ENCODE measurements at regions of chr17 and their contacts with region 1.

Region 1: DNA sequence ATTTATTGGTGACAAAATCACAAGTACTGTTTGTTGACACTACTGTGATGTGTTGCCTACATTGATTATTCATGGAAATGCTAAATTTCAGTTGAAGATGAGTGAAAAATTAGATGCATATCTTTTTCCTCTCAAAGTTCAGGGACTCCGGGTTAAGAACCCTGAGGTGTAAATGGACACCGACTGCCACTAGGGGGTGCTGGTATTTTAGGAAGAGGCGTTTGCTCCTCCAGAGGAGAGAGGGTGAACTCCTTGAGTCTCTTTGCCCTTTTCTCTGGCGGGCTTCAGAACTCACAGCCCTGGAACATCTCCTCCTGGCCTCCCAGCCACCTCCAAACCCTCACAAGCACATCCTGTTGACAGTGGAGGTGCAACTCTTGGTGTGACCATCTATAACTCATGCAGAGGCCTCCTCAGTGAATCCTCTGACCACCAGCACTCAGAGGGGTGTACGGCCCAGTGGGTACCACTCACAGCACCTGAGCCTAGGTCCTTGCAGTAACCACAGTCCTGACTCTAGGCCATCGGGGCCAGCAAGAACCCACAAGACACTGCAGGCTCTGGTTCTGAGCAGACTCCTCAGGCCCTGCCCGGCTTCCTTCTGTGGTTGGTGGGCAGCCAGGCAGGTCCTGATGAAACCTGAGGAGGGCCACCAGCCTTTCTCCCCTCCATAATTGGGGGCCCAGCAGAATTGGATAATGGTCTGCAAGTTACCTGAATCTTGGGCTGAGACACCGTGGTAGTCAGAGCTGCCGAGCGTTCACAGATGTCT is 26.2 kb upstream of the PIK3R5 start:
- DNase-seq: peak; percentile 58 to 71 (median 66)
- H3K4me3 ChIP-seq: no peak overlapping the region
- H3K4me3 Mint-ChIP-seq: no peak overlapping the region
- H3K27ac ChIP-seq: no peak overlapping the region
- H3K27ac Mint-ChIP-seq: peak overlapping the region in 3 of 7 donors; percentile 8 to 21 (median 12)
- H3K4me1 ChIP-seq: peaks cover 0 to 10% of the 10 kb centered on the region in 2 donors
- H3K4me1 Mint-ChIP-seq: peaks cover 9% of the 10 kb centered on the region
- H3K27me3 ChIP-seq: no peaks in the 10 kb centered on the region
- H3K27me3 Mint-ChIP-seq: peaks cover 4 to 9% (median 5%) of the 10 kb centered on the region in 3 donors
- CTCF ChIP-seq: peak; percentile 96

Region 2: DNA sequence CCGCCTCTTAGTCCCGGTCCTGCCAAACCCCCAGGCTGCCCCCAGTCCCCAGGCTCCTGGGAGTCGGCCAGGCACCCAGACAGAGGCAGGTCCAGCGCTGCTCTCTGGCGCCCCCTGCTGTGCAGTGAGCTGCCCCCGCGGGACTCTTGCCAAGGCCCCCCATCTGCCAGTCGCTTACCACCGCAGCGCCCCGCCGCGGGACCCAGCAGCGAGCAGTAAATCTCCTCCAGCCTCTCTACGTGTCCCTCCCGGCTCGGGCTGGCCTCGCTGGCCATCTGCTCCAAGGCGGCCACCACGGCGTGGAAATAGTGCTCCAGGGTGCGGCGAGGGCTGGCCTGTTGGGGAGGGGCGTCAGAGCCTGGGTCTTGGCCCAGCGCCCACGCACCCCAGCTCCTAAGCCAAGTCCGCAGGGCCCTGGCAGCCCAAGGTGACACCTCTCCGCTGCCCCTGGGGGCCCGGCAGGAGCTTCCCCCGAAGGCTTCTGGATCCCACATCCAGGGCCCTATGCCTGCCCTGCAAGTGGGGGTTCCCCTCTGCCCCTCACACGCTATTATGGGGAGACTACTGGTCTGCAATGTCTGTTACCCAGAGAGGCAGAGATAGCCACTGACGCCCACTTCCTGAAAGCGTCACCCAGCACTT is 158.9 kb before region 1 on chr17:
- intact Hi-C with region 1: no loop called
- DNase-seq: peak; percentile 15 to 34 (median 26)
- H3K4me3 ChIP-seq: no peak overlapping the region
- H3K4me3 Mint-ChIP-seq: no peak overlapping the region
- H3K27ac ChIP-seq: peak overlapping the region in 1 of 2 donors; percentile 20
- H3K27ac Mint-ChIP-seq: no peak overlapping the region
- H3K4me1 ChIP-seq: no peaks in the 10 kb centered on the region
- H3K4me1 Mint-ChIP-seq: no peaks in the 10 kb centered on the region
- H3K27me3 ChIP-seq: no peaks in the 10 kb centered on the region
- H3K27me3 Mint-ChIP-seq: no peaks in the 10 kb centered on the region
- CTCF ChIP-seq: peak; percentile 87

Region 3: DNA sequence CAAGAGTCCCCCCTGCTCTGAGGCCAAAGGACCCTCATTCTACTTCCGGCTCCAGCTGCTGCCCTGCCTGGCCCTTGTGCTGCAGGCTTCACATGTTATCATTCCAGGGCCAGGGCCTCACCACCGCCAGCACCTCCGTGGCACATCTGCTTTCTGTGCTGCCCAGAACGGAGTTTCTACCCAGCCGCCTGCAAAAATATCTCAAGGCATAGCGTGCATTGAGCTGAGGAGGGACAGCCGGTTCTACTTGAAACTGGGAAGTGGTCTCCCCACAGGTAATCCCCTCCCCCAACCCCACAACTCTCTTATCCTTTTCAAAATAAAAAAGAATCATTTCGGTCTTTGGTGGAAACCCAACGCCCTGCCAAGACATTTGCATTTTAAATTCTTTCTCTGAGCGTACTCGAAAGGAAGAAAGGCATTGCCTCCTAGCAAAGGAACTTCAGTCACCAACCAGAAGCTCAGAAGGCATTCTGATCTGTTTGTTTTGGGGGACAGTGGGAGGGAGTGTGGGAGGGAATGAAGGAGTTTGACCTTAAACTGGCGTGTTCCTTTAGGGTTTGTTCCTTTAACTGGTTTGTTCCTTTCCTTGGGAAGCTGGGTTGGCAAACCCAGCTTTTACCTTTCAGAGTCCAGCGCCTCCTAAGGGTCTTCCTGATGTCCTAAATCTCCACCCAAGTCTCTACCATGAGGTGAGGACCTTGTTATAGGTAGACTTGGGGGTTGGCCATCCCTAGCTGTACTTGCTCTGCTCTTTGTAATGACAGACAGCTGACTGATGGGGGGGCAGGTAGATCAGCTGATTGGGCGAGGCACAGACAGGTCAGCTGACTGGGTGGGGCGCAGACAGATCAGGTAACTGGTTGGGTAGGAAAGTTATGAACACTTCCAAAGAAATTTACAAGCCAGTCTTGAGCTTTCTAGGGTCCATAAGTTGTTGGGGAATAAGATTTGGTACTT is 90.8 kb before region 1 on chr17:
- intact Hi-C with region 1: loop called in 1 of 2 experiments (anchors 5 kb)
- DNase-seq: no peak
- H3K4me3 ChIP-seq: no peak overlapping the region
- H3K4me3 Mint-ChIP-seq: no peak overlapping the region
- H3K27ac ChIP-seq: peak overlapping the region in 1 of 2 donors; percentile 10
- H3K27ac Mint-ChIP-seq: peak overlapping the region in 6 of 7 donors; percentile 6 to 65 (median 19)
- H3K4me1 ChIP-seq: peaks cover 13 to 16% of the 10 kb centered on the region in 2 donors
- H3K4me1 Mint-ChIP-seq: peaks cover 27% of the 10 kb centered on the region
- H3K27me3 ChIP-seq: no peaks in the 10 kb centered on the region
- H3K27me3 Mint-ChIP-seq: no peaks in the 10 kb centered on the region
- CTCF ChIP-seq: no peak

Region 4: DNA sequence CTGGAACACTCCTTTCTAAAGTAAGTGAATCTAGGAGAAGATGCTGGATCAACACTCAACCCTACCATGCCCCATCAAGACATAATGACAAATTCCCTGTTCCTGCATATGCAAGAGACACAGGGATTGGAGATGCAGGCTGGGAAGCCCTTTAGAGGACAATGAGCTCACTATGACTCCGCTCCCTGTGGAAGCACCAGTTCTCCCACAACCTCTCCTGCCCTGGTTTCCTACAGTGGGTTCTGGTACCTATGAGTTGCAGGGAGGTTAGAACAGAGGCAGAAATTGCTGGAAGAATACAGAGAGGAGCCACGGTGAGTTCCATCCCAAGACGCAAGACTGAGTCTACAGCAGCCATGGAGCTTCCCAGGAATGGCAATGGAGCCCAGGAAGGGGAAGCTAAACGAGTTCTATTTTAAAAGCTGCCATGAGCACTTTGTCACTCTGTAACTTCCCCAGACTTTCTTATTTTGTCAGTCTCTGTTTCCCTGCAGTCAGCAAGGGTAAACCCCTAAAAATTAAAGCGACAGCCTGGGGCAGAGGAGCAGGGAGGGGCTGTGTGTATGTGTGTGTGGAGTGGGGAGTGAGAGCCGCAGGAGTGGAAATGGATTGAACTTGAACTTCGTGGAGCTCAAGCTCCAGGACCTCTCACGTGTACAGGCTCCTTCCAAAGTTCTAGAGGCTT is 82.0 kb before region 1 on chr17:
- intact Hi-C with region 1: loop called (anchors 5 kb)
- DNase-seq: peak in 1 of 3 donors; percentile 4
- H3K4me3 ChIP-seq: no peak overlapping the region
- H3K4me3 Mint-ChIP-seq: no peak overlapping the region
- H3K27ac ChIP-seq: peak overlapping the region in 1 of 2 donors; percentile 60
- H3K27ac Mint-ChIP-seq: peak overlapping the region in 3 of 7 donors; percentile 2 to 73 (median 50)
- H3K4me1 ChIP-seq: no peaks in the 10 kb centered on the region
- H3K4me1 Mint-ChIP-seq: peaks cover 9% of the 10 kb centered on the region
- H3K27me3 ChIP-seq: no peaks in the 10 kb centered on the region
- H3K27me3 Mint-ChIP-seq: no peaks in the 10 kb centered on the region
- CTCF ChIP-seq: no peak